ENCODE measurements at regions of chr13 and their contacts with region 1.

Region 1: GRCh38 chr13:51990791-51991190 is 20.5 kb downstream of the ATP7B start:
- DNase-seq: no peak
- H3K4me3 Mint-ChIP-seq: no peak overlapping the region
- H3K27ac Mint-ChIP-seq: no peak overlapping the region
- H3K4me1 Mint-ChIP-seq: no peaks in the 10 kb centered on the region
- H3K27me3 Mint-ChIP-seq: no peaks in the 10 kb centered on the region

Region 2: DNA sequence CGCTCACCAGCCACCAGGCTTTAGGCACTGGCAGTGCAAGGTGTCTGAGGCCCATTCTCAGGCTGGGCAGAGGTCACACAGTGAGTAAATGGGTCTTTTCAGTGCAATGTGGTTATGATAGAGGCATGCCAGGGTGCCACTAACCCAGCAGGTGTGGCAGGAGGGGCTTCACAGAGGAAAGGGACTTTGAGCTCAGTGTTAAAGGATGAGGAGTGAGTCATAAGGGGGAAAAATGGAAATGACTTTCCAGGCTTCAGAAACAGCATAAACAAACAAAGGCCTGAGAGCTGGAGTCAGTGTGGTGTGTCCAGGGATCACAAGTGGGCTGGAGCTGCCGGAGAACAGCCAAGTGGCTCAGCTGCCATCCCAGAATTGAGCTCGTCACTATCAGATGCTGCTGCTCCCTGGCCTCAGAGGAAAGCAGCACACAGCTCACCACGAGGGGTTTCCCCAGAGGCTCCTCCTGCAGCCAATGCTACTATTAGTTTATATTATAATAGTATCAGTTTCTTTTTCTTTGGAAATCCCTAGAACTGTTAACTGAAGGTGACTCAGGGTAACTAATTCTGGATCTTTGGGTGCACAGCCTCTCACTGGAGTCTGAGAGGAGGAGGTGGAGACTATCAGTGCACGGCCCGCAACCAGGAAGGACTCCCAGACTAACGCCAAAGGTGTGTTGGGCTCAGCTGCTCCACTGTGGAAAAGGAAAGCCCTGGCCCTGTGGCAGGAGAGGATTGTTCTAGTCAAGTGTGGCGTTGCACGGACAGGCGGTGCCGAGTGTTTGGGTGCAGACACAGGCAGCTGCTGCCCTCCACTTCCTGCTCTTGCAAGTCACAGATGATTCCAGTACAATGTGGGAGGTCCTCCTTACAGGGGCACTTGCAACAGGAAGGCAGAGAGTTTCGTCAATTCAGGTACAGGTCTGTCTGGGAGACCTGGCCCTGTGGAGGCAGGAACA is 226.3 kb before region 1 on chr13:
- CTCF ChIA-PET with region 1: no interaction called
- intact Hi-C with region 1: no loop called
- DNase-seq: peak; percentile 84
- H3K4me3 Mint-ChIP-seq: peak overlapping the region; percentile 73
- H3K27ac Mint-ChIP-seq: peak overlapping the region; percentile 82
- H3K4me1 Mint-ChIP-seq: peaks cover 35% of the 10 kb centered on the region
- H3K27me3 Mint-ChIP-seq: no peaks in the 10 kb centered on the region

Region 3: GRCh38 chr13:52001120-52001731 is 10.4 kb after region 1 on chr13:
- CTCF ChIA-PET with region 1: interaction called, 11 read pairs
- intact Hi-C with region 1: no loop called
- DNase-seq: no peak
- H3K4me3 Mint-ChIP-seq: no peak overlapping the region
- H3K27ac Mint-ChIP-seq: no peak overlapping the region
- H3K4me1 Mint-ChIP-seq: no peaks in the 10 kb centered on the region
- H3K27me3 Mint-ChIP-seq: no peaks in the 10 kb centered on the region

Measured in activated naive CD4-positive, alpha-beta T cell treated with anti-CD3 and anti-CD28 coated beads for 36 hours (primary cell).